A673 (cell line): ENCODE measurements at regions of chr1 and their contacts with region 1.

Region 1: GRCh38 chr1:109773146-109773899 is 9.6 kb upstream of the EPS8L3 start:
- DNase-seq: peak; percentile 95
- H3K4me3 ChIP-seq: no peak overlapping the region
- H3K27ac ChIP-seq: no peak overlapping the region
- H3K4me1 ChIP-seq: peaks cover 7% of the 10 kb centered on the region
- H3K27me3 ChIP-seq: no peaks in the 10 kb centered on the region
- CTCF ChIP-seq: peak; percentile 97

Region 2: GRCh38 chr1:109643385-109644230 is 129.7 kb before region 1 on chr1:
- CTCF ChIA-PET with region 1: interaction called, 36 read pairs
- POLR2A ChIA-PET with region 1: no interaction called
- intact Hi-C with region 1: loop called (anchors 5 kb)
- DNase-seq: peak; percentile 85
- H3K4me3 ChIP-seq: no peak overlapping the region
- H3K27ac ChIP-seq: peak overlapping the region; percentile 40
- H3K4me1 ChIP-seq: peaks cover 14% of the 10 kb centered on the region
- H3K27me3 ChIP-seq: no peaks in the 10 kb centered on the region
- CTCF ChIP-seq: peak; percentile 94

Region 3: GRCh38 chr1:110011527-110012041 is 238.3 kb after region 1 on chr1:
- CTCF ChIA-PET with region 1: interaction called, 6 read pairs
- POLR2A ChIA-PET with region 1: no interaction called
- intact Hi-C with region 1: loop called (anchors 10 kb)
- DNase-seq: peak; percentile 63
- H3K4me3 ChIP-seq: no peak overlapping the region
- H3K27ac ChIP-seq: no peak overlapping the region
- H3K4me1 ChIP-seq: peaks cover 11% of the 10 kb centered on the region
- H3K27me3 ChIP-seq: no peaks in the 10 kb centered on the region
- CTCF ChIP-seq: peak; percentile 58

Region 4: GRCh38 chr1:110118636-110119615 is 345.6 kb after region 1 on chr1:
- CTCF ChIA-PET with region 1: no interaction called
- POLR2A ChIA-PET with region 1: no interaction called
- intact Hi-C with region 1: loop called (anchors 10 kb)
- DNase-seq: no peak
- H3K4me3 ChIP-seq: no peak overlapping the region
- H3K27ac ChIP-seq: no peak overlapping the region
- H3K4me1 ChIP-seq: no peaks in the 10 kb centered on the region
- H3K27me3 ChIP-seq: peaks cover 37% of the 10 kb centered on the region
- CTCF ChIP-seq: no peak